ENCODE measurements at regions of chr15 and their contacts with region 1.

Region 1: GRCh38 chr15:99059010-99059981 is 45.6 kb upstream of the SYNM start:
- DNase-seq: peak; percentile 30
- H3K4me3 ChIP-seq: peak overlapping the region; percentile 41 to 67 (median 64)
- H3K27ac ChIP-seq: peak overlapping the region; percentile 13
- H3K4me1 ChIP-seq: peaks cover 7% of the 10 kb centered on the region
- H3K27me3 ChIP-seq: no peaks in the 10 kb centered on the region
- CTCF ChIP-seq: peak; percentile 54 to 57

Region 2: DNA sequence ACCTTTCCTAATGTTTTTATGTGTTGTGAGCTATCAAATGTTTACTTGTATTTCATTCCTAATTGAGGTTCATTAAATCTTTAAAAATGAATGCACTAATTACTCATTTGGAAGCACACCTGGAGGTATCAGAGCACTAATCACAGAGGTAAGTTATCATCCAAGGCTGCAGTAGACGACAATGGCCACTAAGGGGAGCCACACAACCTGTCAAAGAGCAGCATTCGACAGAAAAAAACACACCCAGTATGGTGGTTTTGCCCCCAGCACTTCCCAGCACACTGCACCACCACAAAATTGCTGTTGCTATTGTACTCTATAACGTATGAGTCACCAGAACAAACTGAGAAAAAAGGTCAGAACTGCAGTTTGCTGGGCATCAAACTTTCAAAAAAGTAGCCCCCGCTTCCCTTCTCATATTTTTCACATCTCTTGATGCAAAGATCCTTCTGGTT is 616.9 kb before region 1 on chr15:
- CTCF ChIA-PET with region 1: no interaction called
- dilution Hi-C with region 1: no loop called
- in situ Hi-C with region 1: no loop called
- intact Hi-C with region 1: loop called (anchors 5 kb)
- DNase-seq: peak; percentile 86
- H3K4me3 ChIP-seq: no peak overlapping the region
- H3K27ac ChIP-seq: no peak overlapping the region
- H3K4me1 ChIP-seq: peaks cover 6% of the 10 kb centered on the region
- H3K27me3 ChIP-seq: no peaks in the 10 kb centered on the region
- CTCF ChIP-seq: peak; percentile 89 to 97

Region 3: GRCh38 chr15:98658831-98659699 is 400.2 kb before region 1 on chr15:
- CTCF ChIA-PET with region 1: no interaction called
- dilution Hi-C with region 1: no loop called
- in situ Hi-C with region 1: no loop called
- intact Hi-C with region 1: loop called (anchors 1 kb)
- DNase-seq: peak; percentile 60
- H3K4me3 ChIP-seq: no peak overlapping the region
- H3K27ac ChIP-seq: no peak overlapping the region
- H3K4me1 ChIP-seq: peaks cover 49% of the 10 kb centered on the region
- H3K27me3 ChIP-seq: no peaks in the 10 kb centered on the region
- CTCF ChIP-seq: peak; percentile 91

Region 4: DNA sequence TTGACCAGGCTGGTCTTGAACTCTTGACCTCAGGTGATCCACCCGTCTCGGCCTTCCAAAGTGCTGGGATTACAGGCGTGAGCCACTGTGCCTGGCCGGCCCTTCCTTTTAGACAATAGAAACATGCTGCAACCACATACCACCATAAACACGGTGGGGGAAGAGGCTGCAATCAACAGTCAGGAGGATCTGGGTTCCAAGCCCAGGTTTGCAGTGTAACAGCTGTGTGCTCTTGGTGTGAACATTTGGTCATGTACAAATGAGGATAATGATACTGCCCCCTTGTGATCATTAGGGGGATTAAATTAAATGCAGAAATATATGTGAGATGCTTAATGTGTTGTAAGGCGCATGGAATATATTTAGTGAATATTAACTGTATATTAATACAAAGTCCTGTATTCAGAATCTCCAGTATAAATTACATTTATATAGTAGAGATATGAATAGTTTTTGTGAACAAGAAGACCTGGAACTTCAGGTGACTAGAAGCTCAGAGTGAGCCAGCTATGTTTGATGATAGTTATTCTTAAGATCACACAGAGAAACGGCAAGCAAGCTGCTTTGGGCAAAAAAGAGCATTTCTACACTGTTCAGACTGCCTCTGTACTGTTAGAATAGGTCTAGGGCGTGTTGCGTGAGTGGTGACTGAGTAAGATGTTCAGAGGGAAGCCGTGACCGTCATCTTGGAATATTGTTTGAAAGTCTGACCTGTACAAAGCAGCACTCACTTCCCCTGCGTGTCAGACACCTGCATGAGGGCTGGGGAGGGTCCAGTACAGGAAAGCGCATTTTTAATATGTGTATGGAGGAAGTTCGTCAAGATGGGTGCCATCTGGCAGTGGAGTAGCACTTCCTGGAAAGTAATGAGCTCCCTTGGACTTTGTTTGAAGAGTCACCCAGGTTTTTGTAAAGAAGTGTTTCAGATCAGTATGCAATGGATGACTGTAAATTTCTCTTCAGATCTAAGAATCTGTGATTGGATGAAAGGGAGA is 177.5 kb before region 1 on chr15:
- CTCF ChIA-PET with region 1: no interaction called
- dilution Hi-C with region 1: no loop called
- in situ Hi-C with region 1: loop called in 1 of 2 experiments (anchors 25 kb)
- intact Hi-C with region 1: no loop called
- DNase-seq: peak; percentile 42
- H3K4me3 ChIP-seq: no peak overlapping the region
- H3K27ac ChIP-seq: no peak overlapping the region
- H3K4me1 ChIP-seq: peaks cover 4% of the 10 kb centered on the region
- H3K27me3 ChIP-seq: no peaks in the 10 kb centered on the region
- CTCF ChIP-seq: peak; percentile 59

Region 5: GRCh38 chr15:98927022-98927421 is 132.3 kb before region 1 on chr15:
- CTCF ChIA-PET with region 1: no interaction called
- dilution Hi-C with region 1: loop called (anchors 10 kb)
- in situ Hi-C with region 1: no loop called
- intact Hi-C with region 1: no loop called
- DNase-seq: no peak
- H3K4me3 ChIP-seq: no peak overlapping the region
- H3K27ac ChIP-seq: no peak overlapping the region
- H3K4me1 ChIP-seq: no peaks in the 10 kb centered on the region
- H3K27me3 ChIP-seq: no peaks in the 10 kb centered on the region
- CTCF ChIP-seq: no peak